Upper lobe of right lung (tissue), 1 donor: ENCODE measurements at regions of chr17 and their contacts with region 1.

Region 1: DNA sequence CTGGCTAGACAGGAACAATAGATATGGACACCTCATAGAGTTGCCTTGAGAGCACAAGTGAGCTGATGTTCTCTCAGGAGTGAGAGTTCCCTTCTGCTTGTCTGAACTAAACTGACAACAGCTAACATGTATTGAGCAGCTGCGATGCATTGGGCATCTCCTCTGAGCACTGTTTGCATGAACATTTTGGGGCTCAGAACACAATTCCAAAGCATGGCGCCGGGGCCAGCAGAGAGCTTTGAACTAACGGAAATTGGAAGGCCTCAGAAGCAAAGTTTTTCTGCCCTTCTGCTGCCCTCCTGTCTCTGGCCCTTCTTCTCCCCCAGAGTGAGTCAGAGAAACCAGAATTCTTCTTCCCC is 38.1 kb downstream of the TRPV2 start:
- DNase-seq: no peak
- ATAC-seq: no peak
- H3K4me3 ChIP-seq: no peak overlapping the region
- H3K27ac ChIP-seq: no peak overlapping the region
- H3K4me1 ChIP-seq: no peaks in the 10 kb centered on the region
- H3K27me3 ChIP-seq: no peaks in the 10 kb centered on the region
- CTCF ChIP-seq: no peak

Region 2: GRCh38 chr17:16322636-16323035 is 130.8 kb before region 1 on chr17:
- intact Hi-C with region 1: no loop called
- DNase-seq: no peak
- ATAC-seq: no peak
- H3K4me3 ChIP-seq: no peak overlapping the region
- H3K27ac ChIP-seq: no peak overlapping the region
- H3K4me1 ChIP-seq: no peaks in the 10 kb centered on the region
- H3K27me3 ChIP-seq: no peaks in the 10 kb centered on the region
- CTCF ChIP-seq: no peak

Region 3: DNA sequence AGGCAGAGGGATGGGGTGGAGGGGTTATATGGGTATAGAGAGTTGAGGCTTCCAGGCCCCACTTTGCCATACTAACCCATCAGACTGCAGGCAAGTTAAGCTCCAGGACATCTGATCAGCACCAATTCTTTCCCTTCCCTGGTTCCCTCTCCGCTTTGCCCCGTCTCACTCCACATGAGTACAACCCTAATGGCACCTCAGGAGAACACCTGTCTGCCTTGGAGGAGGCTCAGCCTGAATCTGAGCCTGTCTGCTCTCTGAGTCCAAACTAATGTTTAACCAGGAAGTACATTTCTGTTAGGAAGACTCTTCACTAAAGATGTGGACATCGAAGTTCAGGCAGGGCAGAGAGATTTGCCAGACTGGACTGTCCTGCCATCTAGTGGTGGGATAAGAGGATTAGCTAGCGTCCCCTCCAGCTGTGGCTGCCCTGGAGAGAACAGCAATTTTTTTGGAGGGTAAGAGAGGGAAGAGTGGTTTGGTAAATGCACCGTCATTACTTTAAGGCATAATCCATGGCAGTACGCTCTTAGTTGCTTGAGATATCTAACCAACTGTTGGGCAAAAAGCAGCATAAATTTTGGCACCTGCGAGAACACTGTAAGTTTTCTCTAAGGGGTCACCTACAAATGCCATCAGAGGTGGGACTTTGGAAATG is 67.7 kb after region 1 on chr17:
- intact Hi-C with region 1: loop called (anchors 5 kb)
- DNase-seq: no peak
- ATAC-seq: peak; percentile 98
- H3K4me3 ChIP-seq: no peak overlapping the region
- H3K27ac ChIP-seq: no peak overlapping the region
- H3K4me1 ChIP-seq: peaks cover 5% of the 10 kb centered on the region
- H3K27me3 ChIP-seq: peaks cover 5% of the 10 kb centered on the region
- CTCF ChIP-seq: peak; percentile 92

Region 4: DNA sequence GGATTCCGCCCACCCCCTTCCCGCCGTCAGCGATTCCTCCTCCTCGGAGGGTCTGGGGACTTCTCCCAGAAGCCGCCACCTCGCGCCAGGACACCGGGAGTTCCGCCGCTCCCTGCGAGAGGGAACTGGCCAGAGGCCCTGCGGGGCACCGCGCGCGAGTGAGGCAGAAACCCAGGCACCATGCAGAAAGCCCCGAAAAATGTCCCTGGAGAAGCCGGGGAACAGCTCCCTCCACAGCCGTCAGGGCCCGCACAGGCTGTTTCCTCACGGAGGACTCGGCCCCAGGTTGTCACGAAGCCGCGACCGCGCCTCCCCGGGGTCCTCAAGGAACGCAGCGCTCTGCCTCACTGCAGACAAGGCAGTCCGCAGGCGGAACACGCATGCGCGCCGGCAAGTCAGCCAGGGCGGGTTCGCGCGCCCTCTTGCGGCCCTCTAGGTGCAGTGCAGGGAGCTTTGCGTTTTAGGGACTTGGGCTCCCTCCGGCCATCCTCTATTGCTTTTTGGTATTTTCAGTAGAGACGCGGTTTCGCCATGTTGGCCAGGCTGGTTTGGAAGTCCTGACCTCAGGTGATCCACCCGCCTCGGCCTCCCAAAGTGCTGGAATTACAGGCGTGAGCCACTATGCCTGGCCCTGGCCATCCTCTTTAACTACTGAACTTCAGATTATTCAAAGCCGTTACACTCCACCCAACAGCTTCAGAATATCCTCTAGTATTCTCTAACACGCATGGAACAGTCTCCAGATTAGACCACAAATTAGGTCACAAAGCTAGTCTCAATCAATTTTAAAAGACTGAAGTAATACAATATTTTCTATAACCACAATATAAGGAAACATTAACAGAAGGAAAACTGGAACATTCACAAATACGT is 135.9 kb after region 1 on chr17:
- intact Hi-C with region 1: no loop called
- DNase-seq: peak; percentile 97
- ATAC-seq: peak; percentile 99
- H3K4me3 ChIP-seq: peak overlapping the region; percentile 68
- H3K27ac ChIP-seq: peak overlapping the region; percentile 75
- H3K4me1 ChIP-seq: peaks cover 13% of the 10 kb centered on the region
- H3K27me3 ChIP-seq: no peaks in the 10 kb centered on the region
- CTCF ChIP-seq: peak; percentile 100